Dendritic cell treated with granulocyte-macrophage colony-stimulating factor and Interleukin-4, amounts not matched to agents 40 ng/mL and 50 ng/mL, for 4 days (primary cell): ENCODE measurements at regions of chr20 and their contacts with region 1.

Region 1: GRCh38 chr20:60210779-60211617 is 252.8 kb downstream of the CDH26 start:
- H3K4me3 Mint-ChIP-seq: peak overlapping the region; percentile 44
- H3K27ac Mint-ChIP-seq: no peak overlapping the region
- H3K4me1 Mint-ChIP-seq: peaks cover 10% of the 10 kb centered on the region
- H3K27me3 Mint-ChIP-seq: no peaks in the 10 kb centered on the region

Region 2: DNA sequence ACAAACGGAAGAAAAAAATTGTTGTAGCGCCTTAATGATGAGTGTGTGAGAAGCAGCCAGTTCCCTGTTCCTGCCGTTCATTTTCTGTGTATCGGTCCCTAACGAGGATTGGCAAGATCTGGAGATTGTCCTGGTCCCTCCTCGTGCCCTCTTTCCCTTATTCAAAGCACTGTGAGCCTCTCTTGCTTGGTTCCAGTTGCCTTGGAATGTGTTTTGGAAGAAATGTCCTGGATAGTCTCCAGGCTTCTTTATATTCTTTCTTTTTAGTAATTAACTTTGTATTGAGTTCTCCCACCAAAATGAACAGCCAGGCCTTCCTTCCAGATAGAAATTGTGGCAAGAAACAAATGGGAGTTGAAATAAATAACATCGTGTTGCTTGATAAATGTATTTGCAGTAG is 95.6 kb after region 1 on chr20:
- intact Hi-C with region 1: no loop called
- H3K4me3 Mint-ChIP-seq: no peak overlapping the region
- H3K27ac Mint-ChIP-seq: no peak overlapping the region
- H3K4me1 Mint-ChIP-seq: no peaks in the 10 kb centered on the region
- H3K27me3 Mint-ChIP-seq: no peaks in the 10 kb centered on the region

Region 3: DNA sequence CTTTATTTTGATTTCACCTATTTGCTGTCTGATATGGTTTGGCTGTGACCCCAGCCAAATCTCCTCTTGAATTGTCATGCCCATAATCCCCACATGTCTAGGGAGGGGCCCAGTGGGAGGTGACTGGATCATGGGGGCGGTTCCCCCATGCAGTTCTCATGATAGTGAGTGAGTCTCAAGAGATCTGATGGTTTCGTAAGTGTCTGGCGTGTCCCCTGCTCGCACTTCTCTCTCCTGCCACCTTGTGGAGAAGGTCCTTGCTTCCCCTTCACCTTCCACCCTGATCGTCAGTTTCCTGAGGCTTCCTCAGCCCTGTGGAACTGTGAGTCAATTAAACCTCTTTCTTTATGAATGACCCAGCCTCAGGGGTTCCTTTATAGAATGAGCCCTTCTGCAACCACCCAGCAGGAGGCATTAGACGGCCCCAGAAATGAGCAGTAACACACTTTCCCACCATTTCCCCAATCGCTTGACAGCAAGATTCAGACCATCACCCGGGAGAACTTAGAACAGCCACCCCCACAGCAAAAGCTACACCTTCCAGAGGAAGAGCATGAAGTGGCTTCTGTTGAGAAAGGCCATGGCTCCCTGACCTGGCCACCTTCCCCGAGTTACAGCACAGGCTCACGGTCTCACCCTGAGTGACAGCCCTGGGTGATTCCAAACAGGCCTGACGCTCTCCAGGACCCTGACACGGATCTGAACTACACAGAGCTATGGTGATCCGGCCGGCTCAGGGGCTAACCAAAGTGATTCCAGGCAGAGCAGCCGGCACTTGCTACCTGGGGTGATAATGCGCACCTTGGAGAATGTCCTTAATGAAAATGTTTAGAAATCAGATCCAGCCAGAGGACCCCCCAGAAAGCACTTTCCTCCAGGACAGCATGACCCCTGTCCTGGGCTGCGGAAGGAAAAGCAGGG is 909.9 kb after region 1 on chr20:
- intact Hi-C with region 1: loop called (anchors 5 kb)
- H3K4me3 Mint-ChIP-seq: no peak overlapping the region
- H3K27ac Mint-ChIP-seq: no peak overlapping the region
- H3K4me1 Mint-ChIP-seq: peaks cover 15% of the 10 kb centered on the region
- H3K27me3 Mint-ChIP-seq: peaks cover 21% of the 10 kb centered on the region

Region 4: DNA sequence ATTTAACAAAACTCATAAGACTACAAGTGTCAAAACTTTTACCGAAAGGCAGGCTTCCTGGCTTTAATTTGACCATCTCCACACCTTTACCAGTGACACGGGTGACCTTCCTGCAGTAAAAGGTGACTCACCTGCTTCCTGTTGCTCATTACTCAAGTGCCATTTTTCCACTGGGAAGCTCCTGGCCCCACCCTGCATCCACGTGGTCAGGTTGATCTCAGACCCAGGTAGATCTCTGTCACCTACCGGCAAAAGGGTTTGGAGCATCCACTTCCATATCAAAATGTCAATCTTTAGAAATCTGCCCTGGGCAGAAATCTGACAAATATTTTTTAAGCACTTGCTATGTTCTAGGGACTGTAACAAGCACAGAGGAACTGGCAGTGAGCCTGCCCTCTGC is 1009.2 kb after region 1 on chr20:
- intact Hi-C with region 1: loop called (anchors 5 kb)
- H3K4me3 Mint-ChIP-seq: no peak overlapping the region
- H3K27ac Mint-ChIP-seq: no peak overlapping the region
- H3K4me1 Mint-ChIP-seq: no peaks in the 10 kb centered on the region
- H3K27me3 Mint-ChIP-seq: no peaks in the 10 kb centered on the region